ENCODE measurements at regions of chr7 and their contacts with region 1.

Region 1: GRCh38 chr7:98354511-98355257 is 46.2 kb downstream of the BAIAP2L1 start:
- DNase-seq: peak; percentile 81
- H3K4me3 Mint-ChIP-seq: peak overlapping the region; percentile 67
- H3K27ac Mint-ChIP-seq: peak overlapping the region; percentile 94
- H3K4me1 Mint-ChIP-seq: peaks cover 40% of the 10 kb centered on the region
- H3K27me3 Mint-ChIP-seq: no peaks in the 10 kb centered on the region
- CTCF ChIP-seq: no peak

Region 2: DNA sequence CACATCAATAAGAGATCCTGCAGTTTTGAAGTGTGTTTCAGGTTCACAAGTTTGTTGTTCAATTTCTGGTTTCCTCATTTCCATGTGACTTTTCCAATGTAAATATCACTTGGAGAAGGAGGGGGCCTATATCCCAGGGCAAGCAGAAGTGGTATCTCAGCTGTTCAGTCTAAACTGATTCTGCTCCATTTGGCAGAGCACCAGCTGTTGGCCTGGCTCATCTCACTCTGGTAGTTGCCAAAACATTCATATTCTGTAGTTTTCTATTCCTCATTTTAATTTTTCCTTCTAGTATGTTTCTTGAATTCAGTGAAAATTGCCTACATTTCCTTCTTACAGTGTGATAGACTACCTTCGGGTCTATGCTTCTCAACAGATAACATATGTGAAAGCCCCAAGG is 724.6 kb before region 1 on chr7:
- CTCF ChIA-PET with region 1: no interaction called
- intact Hi-C with region 1: no loop called
- DNase-seq: no peak
- H3K4me3 Mint-ChIP-seq: no peak overlapping the region
- H3K27ac Mint-ChIP-seq: no peak overlapping the region
- H3K4me1 Mint-ChIP-seq: no peaks in the 10 kb centered on the region
- H3K27me3 Mint-ChIP-seq: peaks cover 33% of the 10 kb centered on the region
- CTCF ChIP-seq: no peak

Region 3: DNA sequence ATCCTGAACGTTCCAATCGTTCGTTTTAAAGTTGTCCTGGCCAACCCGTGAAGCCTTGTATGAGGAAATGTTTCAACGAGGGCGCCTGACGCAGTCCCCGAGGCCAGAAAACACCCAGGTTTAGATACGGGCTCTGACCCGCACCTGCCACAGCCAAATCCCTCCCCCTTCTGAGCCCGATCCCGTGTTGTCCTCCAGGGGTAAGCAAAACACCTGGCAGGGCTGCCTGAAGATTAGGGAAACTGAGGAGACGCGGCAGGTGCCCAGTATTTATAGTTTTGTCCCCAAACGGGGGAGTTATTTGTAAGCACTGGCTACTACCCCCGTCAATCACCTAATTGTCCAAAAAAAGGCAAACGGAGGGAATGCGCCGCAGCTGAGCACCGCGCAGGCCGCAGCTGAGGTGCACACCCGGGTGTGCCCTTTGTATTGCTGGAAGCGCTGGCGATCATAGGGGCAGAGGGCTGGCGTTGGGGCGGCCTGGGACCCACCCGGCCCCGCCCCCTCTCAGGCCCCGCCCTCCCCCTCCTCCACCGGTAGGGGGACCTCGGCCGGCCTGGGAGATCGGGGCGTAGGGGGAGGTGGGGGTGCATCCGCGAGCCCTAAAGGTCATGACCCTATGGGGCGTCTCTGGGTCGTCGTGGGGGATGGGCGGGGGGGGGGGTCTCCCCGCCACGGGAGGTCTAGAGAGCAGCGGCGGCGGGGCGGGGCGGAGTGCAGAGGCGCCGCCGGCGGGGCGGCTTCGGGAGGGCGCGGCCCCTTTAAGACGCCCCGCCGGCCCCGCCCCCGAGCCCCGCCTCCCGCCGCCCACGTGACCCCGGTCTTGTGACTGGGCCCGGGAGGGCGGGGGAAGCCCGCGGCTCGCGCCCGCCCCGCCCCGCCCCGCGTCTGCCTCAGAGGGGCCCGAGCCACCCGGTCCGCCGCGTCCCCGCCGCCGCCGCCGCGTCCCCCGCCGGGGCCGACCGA is 73.6 kb before region 1 on chr7 and contains the start of gene BRI3:
- CTCF ChIA-PET with region 1: interaction called, 3 read pairs
- intact Hi-C with region 1: loop called (anchors 10 kb)
- DNase-seq: peak; percentile 82
- H3K4me3 Mint-ChIP-seq: peak within 1 kb of the TSS; percentile 91
- H3K27ac Mint-ChIP-seq: peak within 1 kb of the TSS; percentile 91
- H3K4me1 Mint-ChIP-seq: peaks cover 32% of the 10 kb centered on the region
- H3K27me3 Mint-ChIP-seq: no peaks in the 10 kb centered on the region
- CTCF ChIP-seq: no peak
- total RNA-seq, gene BRI3: 101 and 124 TPM in 2 replicates

Region 4: GRCh38 chr7:98387544-98388224 is 33.0 kb after region 1 on chr7:
- CTCF ChIA-PET with region 1: interaction called, 6 read pairs
- intact Hi-C with region 1: loop called (anchors 2 kb)
- DNase-seq: no peak
- H3K4me3 Mint-ChIP-seq: no peak overlapping the region
- H3K27ac Mint-ChIP-seq: no peak overlapping the region
- H3K4me1 Mint-ChIP-seq: no peaks in the 10 kb centered on the region
- H3K27me3 Mint-ChIP-seq: no peaks in the 10 kb centered on the region
- CTCF ChIP-seq: no peak

Measured in Calu3 (cell line).